Mammary epithelial cell (primary cell): ENCODE measurements at regions of chr19 and their contacts with region 1.

Region 1: DNA sequence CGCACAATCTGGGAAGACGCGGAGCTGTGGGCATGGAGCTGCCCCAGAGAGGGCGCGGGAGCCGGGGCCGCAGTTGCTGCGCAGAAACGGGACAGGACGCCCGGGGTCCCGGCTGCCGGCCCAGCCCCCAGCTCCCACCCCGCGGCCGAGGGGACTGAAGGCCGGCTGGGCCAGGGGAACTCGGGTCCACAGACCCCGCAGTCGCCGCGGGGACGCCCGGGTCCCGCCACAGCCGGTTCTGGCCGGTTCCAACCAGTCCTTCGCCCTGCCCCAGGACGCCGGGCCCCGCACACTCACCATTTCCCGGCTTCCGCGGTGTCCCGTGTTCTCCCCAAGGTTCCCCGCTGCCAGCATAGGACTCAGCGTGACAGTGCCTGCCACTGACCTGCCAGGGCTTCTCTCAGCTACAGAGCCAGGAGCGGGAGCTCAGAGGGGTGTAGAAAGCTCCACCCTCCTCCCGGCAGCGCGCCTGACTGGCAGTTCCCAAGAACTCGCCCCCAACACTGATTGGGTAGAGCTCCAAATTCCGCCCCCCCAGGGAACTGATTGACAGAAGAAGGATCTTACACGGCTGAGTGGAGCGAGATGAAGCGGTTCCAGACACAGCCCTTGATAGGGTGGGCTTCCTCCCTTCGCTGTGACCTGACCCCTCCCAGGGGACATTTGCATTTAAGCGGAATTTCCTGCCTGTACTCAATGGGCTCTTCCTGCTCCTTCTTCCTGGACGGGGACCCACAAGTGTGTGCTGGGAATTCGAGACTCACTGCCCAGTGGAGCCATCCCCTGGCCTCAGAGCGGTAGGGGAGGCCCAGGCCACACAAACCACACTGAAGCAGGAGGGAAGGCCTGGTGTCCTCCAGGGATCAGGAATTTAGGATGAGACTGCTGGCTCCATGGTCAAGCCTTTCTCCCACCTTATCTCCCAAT is at the start of gene ZNF442:
- DNase-seq: peak; percentile 93
- H3K4me3 ChIP-seq: peak within 1 kb of the TSS; percentile 66 to 83 (median 72)
- H3K27ac ChIP-seq: no peak within 1 kb of the TSS
- H3K4me1 ChIP-seq: no peaks in the 10 kb centered on the region
- H3K27me3 ChIP-seq: no peaks in the 10 kb centered on the region
- CTCF ChIP-seq: peak; percentile 14 to 65
- total RNA-seq, gene ZNF442: 2.0 to 2.5 TPM

Region 2: GRCh38 chr19:12064590-12065538 is 300.6 kb before region 1 on chr19 and contains the start of gene ZNF844:
- CTCF ChIA-PET with region 1: interaction called, 14 read pairs
- dilution Hi-C with region 1: no loop called
- in situ Hi-C with region 1: no loop called
- intact Hi-C with region 1: no loop called
- DNase-seq: peak; percentile 43
- H3K4me3 ChIP-seq: peak within 1 kb of the TSS in 1 of 3 experiments; percentile 29
- H3K27ac ChIP-seq: no peak within 1 kb of the TSS
- H3K4me1 ChIP-seq: no peaks in the 10 kb centered on the region
- H3K27me3 ChIP-seq: no peaks in the 10 kb centered on the region
- CTCF ChIP-seq: no peak
- total RNA-seq, gene ZNF844: 1.0 to 4.2 TPM

Region 3: GRCh38 chr19:12090807-12091206 is 274.7 kb before region 1 on chr19:
- CTCF ChIA-PET with region 1: interaction called, 12 read pairs
- dilution Hi-C with region 1: no loop called
- in situ Hi-C with region 1: no loop called
- intact Hi-C with region 1: no loop called
- DNase-seq: peak; percentile 10
- H3K4me3 ChIP-seq: no peak overlapping the region
- H3K27ac ChIP-seq: no peak overlapping the region
- H3K4me1 ChIP-seq: no peaks in the 10 kb centered on the region
- H3K27me3 ChIP-seq: no peaks in the 10 kb centered on the region
- CTCF ChIP-seq: peak in 1 of 2 donors; percentile 50

Region 4: GRCh38 chr19:12294249-12295158 is 71.0 kb before region 1 on chr19 and contains the start of gene ZNF44:
- CTCF ChIA-PET with region 1: no interaction called
- dilution Hi-C with region 1: no loop called
- in situ Hi-C with region 1: no loop called
- intact Hi-C with region 1: loop called (anchors 2 kb)
- DNase-seq: peak; percentile 95
- H3K4me3 ChIP-seq: peak within 1 kb of the TSS; percentile 72 to 82 (median 73)
- H3K27ac ChIP-seq: peak within 1 kb of the TSS; percentile 66
- H3K4me1 ChIP-seq: peaks cover 9% of the 10 kb centered on the region
- H3K27me3 ChIP-seq: no peaks in the 10 kb centered on the region
- CTCF ChIP-seq: no peak
- total RNA-seq, gene ZNF44: 6.6 to 7.3 TPM

Region 5: DNA sequence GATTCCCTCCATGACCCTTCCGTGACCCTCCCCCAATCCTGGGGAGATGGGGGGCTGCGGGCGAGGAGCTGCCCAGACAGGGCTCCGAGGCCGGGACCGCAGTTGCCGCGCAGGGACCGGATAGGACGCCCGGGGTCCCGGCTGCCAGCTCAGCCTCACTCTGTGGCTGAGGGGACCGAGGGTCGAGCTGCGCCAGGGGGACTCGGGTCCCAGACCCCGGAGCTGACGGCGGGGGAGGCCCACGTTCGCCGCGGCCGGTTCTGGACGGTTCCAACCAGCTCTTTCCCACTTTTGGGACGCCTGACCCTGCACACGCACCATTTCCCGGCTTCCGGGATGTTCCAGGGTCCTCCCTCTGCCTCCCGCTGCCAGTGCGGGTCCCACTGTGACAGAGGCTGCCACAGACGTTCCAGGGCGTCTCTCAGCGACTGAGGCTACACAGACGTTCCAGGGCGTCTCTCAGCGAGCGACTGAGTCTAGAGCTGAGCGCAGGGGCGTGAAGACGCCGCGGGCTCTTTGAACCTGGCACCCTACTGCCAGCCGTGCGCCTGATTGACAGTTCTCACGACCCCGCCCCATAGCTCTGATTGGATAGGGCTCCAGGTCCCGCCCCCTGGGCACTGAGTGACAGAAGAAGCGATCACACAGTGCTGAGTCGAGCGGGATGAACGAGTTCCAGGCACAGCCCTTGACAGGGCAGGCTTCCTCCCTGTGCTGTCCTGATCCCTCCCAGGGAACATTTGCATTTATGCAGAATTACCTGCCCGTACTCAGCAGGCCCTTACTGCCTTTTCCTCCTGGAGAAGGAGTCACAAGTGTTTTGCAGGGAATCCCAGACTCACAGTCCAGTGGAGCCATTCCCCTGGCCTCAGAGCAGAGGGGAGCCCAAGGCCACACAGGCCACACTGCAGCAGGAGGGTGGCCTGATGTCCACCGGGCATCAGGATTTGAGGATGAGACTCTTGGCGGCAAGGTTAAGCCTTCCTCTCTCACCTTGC is 32.0 kb before region 1 on chr19 and contains the start of gene ZNF563:
- CTCF ChIA-PET with region 1: interaction called, 8 read pairs
- dilution Hi-C with region 1: no loop called
- in situ Hi-C with region 1: no loop called
- intact Hi-C with region 1: loop called (anchors 1 kb)
- DNase-seq: peak; percentile 94
- H3K4me3 ChIP-seq: peak within 1 kb of the TSS; percentile 48 to 70 (median 59)
- H3K27ac ChIP-seq: peak within 1 kb of the TSS; percentile 43
- H3K4me1 ChIP-seq: no peaks in the 10 kb centered on the region
- H3K27me3 ChIP-seq: no peaks in the 10 kb centered on the region
- CTCF ChIP-seq: no peak
- total RNA-seq, gene ZNF563: 3.7 to 5.0 TPM

Region 6: DNA sequence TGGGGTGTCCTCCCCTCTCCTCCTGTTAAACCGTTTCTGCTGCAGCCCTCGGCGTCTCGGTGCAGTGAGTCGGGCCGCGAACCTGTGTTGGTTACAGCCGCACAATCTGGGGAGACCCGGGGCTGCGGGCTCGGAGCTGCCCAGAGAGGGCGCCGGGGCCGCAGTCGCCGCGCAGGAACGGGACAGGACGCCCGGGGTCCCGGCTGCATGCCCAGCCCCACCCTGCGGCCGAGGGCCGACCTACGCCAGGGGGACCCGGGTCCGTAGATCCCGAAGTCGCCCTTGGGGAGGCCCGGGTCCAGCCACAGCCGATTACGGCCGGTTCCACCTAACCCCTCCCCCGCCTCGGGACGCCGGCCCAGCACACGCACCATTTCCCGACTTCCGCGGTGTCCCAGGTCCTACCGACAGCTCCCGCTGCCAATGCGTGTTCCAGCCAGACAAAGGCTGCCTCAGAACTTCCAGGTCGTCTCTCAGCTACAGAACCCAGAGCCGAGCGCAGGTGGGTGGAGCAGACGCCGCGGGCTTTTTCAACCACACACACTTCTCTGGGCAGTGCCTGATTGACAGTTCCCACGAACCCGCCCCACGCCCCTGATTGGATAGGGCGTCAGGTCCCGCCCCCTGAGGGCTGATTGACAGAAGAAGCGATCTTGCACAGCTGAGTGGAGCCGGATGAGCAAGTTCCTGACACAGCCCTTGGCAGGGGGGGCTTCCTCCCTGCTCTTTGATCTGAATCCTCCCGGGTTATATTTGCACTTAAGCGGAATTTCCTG is 75.2 kb after region 1 on chr19 and contains the start of gene ZNF443:
- CTCF ChIA-PET with region 1: no interaction called
- dilution Hi-C with region 1: no loop called
- in situ Hi-C with region 1: no loop called
- intact Hi-C with region 1: no loop called
- DNase-seq: peak; percentile 99
- H3K4me3 ChIP-seq: peak within 1 kb of the TSS; percentile 70 to 91 (median 83)
- H3K27ac ChIP-seq: peak within 1 kb of the TSS; percentile 44
- H3K4me1 ChIP-seq: no peaks in the 10 kb centered on the region
- H3K27me3 ChIP-seq: no peaks in the 10 kb centered on the region
- CTCF ChIP-seq: no peak
- total RNA-seq, gene ZNF443: 2.2 to 3.5 TPM